Activated CD4-positive, alpha-beta memory T cell treated with anti-CD3 and anti-CD28 coated beads for 36 hours (primary cell): ENCODE measurements at regions of chr9 and their contacts with region 1.

Region 1: GRCh38 chr9:32378993-32379729 is 5.3 kb upstream of the ACO1 start:
- DNase-seq: peak; percentile 37
- H3K4me3 Mint-ChIP-seq: peak overlapping the region; percentile 31
- H3K27ac Mint-ChIP-seq: no peak overlapping the region
- H3K4me1 Mint-ChIP-seq: peaks cover 14% of the 10 kb centered on the region
- H3K27me3 Mint-ChIP-seq: peaks cover 5% of the 10 kb centered on the region

Region 2: GRCh38 chr9:32350682-32351081 is 28.5 kb before region 1 on chr9:
- CTCF ChIA-PET with region 1: no interaction called
- POLR2A ChIA-PET with region 1: no interaction called
- intact Hi-C with region 1: no loop called
- DNase-seq: no peak
- H3K4me3 Mint-ChIP-seq: no peak overlapping the region
- H3K27ac Mint-ChIP-seq: no peak overlapping the region
- H3K4me1 Mint-ChIP-seq: no peaks in the 10 kb centered on the region
- H3K27me3 Mint-ChIP-seq: no peaks in the 10 kb centered on the region

Region 3: GRCh38 chr9:32411753-32412152 is 32.6 kb after region 1 on chr9:
- CTCF ChIA-PET with region 1: interaction called, 12 read pairs
- POLR2A ChIA-PET with region 1: no interaction called
- intact Hi-C with region 1: no loop called
- DNase-seq: no peak
- H3K4me3 Mint-ChIP-seq: no peak overlapping the region
- H3K27ac Mint-ChIP-seq: no peak overlapping the region
- H3K4me1 Mint-ChIP-seq: no peaks in the 10 kb centered on the region
- H3K27me3 Mint-ChIP-seq: no peaks in the 10 kb centered on the region

Region 4: DNA sequence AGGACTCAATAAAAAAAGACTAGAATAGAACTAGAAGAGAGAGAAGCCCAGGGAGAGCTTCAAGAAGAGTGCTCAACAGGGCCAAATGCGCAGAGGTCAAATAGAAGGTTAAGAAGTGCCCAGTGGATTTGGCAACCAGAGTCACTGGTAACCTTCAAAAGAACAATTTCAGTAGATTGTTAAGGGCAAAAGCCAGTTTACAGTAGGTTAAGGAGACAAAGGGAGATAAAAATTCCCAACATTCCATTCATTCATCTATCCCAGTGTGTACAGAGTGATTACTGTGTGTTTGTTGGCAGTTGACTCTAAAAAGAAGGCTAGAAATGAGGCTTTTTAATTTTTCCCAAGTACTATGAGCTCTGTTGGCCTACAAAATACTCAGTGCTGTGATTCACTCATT is 77.4 kb after region 1 on chr9:
- CTCF ChIA-PET with region 1: interaction called, 11 read pairs
- POLR2A ChIA-PET with region 1: no interaction called
- intact Hi-C with region 1: no loop called
- DNase-seq: no peak
- H3K4me3 Mint-ChIP-seq: no peak overlapping the region
- H3K27ac Mint-ChIP-seq: no peak overlapping the region
- H3K4me1 Mint-ChIP-seq: no peaks in the 10 kb centered on the region
- H3K27me3 Mint-ChIP-seq: no peaks in the 10 kb centered on the region

Region 5: DNA sequence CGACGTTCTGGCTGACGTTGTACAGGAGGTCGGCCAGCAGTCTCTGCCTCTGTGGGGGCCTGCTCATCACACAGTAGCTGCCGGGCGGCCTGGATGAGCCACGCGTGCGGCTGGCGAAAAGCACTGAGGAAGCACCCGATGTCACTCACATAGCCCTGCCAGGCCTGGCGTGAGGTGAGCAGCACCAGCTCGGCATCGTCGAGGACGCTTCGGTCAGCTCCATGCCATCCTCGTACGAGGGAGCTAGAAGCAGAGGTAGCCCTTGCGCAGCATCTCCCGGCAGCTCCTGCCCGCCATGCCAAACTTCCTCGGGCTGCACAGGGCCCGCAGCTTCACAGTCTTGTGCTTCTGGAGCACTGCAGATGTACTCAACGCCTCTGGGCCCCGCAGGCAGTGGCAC is 187.6 kb after region 1 on chr9:
- CTCF ChIA-PET with region 1: interaction called, 147 read pairs
- POLR2A ChIA-PET with region 1: interaction called, 20 read pairs
- intact Hi-C with region 1: no loop called
- DNase-seq: no peak
- H3K4me3 Mint-ChIP-seq: no peak overlapping the region
- H3K27ac Mint-ChIP-seq: no peak overlapping the region
- H3K4me1 Mint-ChIP-seq: peaks cover 12% of the 10 kb centered on the region
- H3K27me3 Mint-ChIP-seq: no peaks in the 10 kb centered on the region

Region 6: GRCh38 chr9:32589083-32589723 is 210.0 kb after region 1 on chr9:
- CTCF ChIA-PET with region 1: interaction called, 26 read pairs
- POLR2A ChIA-PET with region 1: no interaction called
- intact Hi-C with region 1: no loop called
- DNase-seq: no peak
- H3K4me3 Mint-ChIP-seq: no peak overlapping the region
- H3K27ac Mint-ChIP-seq: no peak overlapping the region
- H3K4me1 Mint-ChIP-seq: no peaks in the 10 kb centered on the region
- H3K27me3 Mint-ChIP-seq: peaks cover 14% of the 10 kb centered on the region